Psoas muscle (tissue), 8 donors: ENCODE measurements at regions of chr5 and their contacts with region 1.

Region 1: GRCh38 chr5:57173185-57174127 is at the start of gene GPBP1:
- DNase-seq: peak; percentile 99
- ATAC-seq: peak; percentile 90 to 96 (median 93)
- H3K4me3 ChIP-seq: peak within 1 kb of the TSS; percentile 98
- H3K27ac ChIP-seq: peak within 1 kb of the TSS; percentile 99
- H3K4me1 ChIP-seq: peaks cover 17% of the 10 kb centered on the region
- H3K27me3 ChIP-seq: no peaks in the 10 kb centered on the region
- CTCF ChIP-seq: no peak
- total RNA-seq, gene GPBP1: 45.0 to 54.5 (median 53.3) TPM

Region 2: GRCh38 chr5:55994574-55995333 is 1178.7 kb before region 1 on chr5 and contains the start of gene IL6ST:
- intact Hi-C with region 1: loop called in 1 of 2 experiments (anchors 10 kb)
- DNase-seq: peak; percentile 99
- ATAC-seq: peak; percentile 92 to 98 (median 96)
- H3K4me3 ChIP-seq: peak within 1 kb of the TSS; percentile 79
- H3K27ac ChIP-seq: peak within 1 kb of the TSS; percentile 98
- H3K4me1 ChIP-seq: peaks cover 21% of the 10 kb centered on the region
- H3K27me3 ChIP-seq: no peaks in the 10 kb centered on the region
- CTCF ChIP-seq: peak; percentile 17
- total RNA-seq, gene IL6ST: 118 to 255 (median 162) TPM

Region 3: DNA sequence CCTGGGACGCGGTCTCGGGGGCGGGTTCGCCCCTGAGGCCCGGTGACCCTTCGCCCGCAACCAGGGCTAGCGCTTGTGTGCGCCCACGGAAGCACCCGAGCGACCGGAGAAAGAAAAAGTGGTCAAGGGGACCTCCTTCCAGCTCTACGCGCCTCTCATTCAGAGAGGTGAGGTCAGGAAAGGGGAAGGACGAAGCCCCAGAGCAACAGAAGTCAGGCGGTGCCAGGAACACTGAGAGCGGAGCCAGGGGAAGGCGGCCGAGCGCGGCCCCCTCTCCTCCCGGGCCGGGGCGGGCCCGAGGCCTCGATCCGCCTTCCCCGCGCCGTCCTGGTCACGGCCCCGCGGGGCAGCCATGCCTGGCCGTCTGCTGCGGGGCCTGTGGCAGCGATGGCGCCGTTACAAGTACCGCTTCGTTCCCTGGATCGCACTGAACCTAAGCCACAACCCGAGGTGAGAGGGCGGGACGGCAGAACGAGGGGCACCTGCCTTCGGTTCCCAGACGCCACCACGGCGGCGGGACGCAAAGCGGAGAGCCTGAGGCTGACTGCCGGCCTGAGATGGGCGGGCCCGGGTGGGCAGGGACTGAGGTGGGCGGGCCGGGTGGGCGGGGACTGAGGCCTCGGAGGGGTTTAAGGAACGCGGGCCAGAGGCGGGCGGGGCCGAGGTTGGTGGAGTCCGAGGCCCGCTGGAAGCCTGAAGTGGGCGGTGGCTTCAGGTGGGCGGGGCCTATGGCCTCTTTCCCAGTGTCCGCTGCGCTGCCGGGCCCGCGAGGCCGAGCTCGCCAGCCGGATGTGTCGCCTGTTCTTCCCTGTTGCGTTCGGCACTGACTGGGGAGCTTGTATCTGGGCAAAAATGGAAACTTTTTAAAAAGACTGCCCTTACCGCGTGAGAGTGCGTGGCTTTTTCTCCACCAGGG is 263.9 kb before region 1 on chr5 and contains the start of gene SETD9:
- intact Hi-C with region 1: loop called in 1 of 2 experiments (anchors 5 kb)
- DNase-seq: peak; percentile 99
- ATAC-seq: peak; percentile 92 to 96 (median 95)
- H3K4me3 ChIP-seq: peak within 1 kb of the TSS; percentile 82
- H3K27ac ChIP-seq: peak within 1 kb of the TSS; percentile 96
- H3K4me1 ChIP-seq: peaks cover 9% of the 10 kb centered on the region
- H3K27me3 ChIP-seq: no peaks in the 10 kb centered on the region
- CTCF ChIP-seq: no peak
- total RNA-seq, gene SETD9: 4.9 to 16.3 (median 11.0) TPM

Region 4: GRCh38 chr5:56951946-56952691 is 221.3 kb before region 1 on chr5 and contains the start of gene MIER3:
- intact Hi-C with region 1: loop called (anchors 2 to 5 kb)
- DNase-seq: peak; percentile 82 to 87
- ATAC-seq: peak; percentile 95 to 98 (median 97)
- H3K4me3 ChIP-seq: peak within 1 kb of the TSS; percentile 91
- H3K27ac ChIP-seq: peak within 1 kb of the TSS; percentile 76
- H3K4me1 ChIP-seq: peaks cover 5% of the 10 kb centered on the region
- H3K27me3 ChIP-seq: no peaks in the 10 kb centered on the region
- CTCF ChIP-seq: no peak
- total RNA-seq, gene MIER3: 11.9 to 20.5 (median 14.7) TPM

Region 5: DNA sequence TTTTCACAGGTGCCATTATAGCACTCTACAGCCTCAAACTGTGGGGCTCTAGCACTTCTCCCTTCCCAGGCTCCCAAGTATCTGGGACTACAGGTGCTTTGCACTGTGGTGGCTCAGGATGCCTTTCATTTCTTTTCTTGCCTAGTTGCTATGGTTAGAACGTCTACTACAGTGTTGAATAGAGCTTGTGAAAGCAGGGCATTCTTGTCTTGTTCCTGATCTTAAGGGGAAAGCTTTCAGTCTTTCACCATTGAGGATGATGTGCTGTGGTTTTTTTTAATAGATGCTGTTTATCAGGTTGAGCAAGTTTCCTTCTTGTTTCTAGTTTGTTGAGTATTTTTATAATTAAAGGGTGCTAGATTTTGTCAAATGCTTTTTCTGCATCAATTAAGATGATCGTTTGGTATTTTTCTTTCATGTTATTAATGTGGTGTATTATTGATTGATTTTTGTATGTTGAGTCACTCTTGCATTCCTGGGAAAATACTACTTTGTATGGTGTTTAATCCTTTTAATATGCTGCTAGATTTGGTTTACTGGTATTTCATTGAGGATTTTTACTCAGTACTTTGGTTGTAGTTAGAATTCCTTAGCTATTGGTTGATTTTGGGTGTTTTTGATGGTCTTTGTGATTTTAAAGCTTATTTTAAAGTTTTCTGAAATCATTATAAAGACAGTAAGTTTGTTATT is 36.0 kb after region 1 on chr5:
- intact Hi-C with region 1: loop called (anchors 5 kb)
- DNase-seq: no peak
- ATAC-seq: no peak
- H3K4me3 ChIP-seq: no peak overlapping the region
- H3K27ac ChIP-seq: no peak overlapping the region
- H3K4me1 ChIP-seq: peaks cover 45% of the 10 kb centered on the region
- H3K27me3 ChIP-seq: no peaks in the 10 kb centered on the region
- CTCF ChIP-seq: no peak